ENCODE measurements at regions of chr5 and their contacts with region 1.

Region 1: DNA sequence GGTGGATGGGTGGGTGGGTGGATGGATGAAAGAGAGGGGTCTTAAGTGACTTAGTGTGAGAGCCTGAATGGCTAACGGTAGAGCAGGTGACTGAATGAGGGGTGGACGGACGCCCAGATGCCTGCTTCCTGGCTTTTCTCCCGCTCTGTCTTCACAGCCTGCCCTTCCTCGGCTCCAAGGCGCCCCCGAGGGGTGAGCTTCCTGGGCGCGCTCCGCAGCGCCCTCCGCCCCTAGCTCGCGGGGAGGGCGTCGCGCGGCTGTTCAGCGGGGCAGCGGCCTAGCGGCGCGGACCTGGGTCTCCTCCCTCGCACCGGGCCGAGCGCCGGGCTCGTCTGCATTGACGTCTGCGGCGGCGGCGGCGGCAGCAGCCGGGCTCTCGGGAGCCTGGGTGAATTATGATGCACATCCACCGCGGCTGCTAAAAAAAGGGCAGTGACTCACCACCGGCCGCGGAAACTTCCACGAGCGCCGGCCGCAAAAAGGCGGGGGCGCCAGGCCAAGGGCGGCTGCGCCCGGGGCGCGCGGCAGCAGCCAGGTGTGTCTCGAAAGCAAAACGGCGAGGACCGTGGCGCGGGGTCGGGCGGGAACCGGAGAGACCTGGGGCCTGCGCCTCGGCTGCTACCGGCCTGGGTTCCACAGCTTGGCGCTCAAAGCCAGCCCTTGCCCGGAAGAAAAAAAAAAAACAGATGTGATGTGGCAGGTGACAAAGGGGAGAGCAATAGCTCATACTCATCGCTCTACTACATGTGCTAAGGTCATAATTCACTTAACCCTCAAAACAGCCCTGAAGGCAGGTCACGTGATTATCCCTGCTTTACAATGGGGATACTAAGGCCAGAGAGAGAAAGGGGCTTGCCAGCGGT is 143.0 kb upstream of the ADRA1B start:
- DNase-seq: peak; percentile 92
- H3K4me3 Mint-ChIP-seq: peak overlapping the region; percentile 39
- H3K27ac Mint-ChIP-seq: peak overlapping the region; percentile 69
- H3K4me1 Mint-ChIP-seq: peaks cover 14% of the 10 kb centered on the region
- H3K27me3 Mint-ChIP-seq: peaks cover 45% of the 10 kb centered on the region

Region 2: DNA sequence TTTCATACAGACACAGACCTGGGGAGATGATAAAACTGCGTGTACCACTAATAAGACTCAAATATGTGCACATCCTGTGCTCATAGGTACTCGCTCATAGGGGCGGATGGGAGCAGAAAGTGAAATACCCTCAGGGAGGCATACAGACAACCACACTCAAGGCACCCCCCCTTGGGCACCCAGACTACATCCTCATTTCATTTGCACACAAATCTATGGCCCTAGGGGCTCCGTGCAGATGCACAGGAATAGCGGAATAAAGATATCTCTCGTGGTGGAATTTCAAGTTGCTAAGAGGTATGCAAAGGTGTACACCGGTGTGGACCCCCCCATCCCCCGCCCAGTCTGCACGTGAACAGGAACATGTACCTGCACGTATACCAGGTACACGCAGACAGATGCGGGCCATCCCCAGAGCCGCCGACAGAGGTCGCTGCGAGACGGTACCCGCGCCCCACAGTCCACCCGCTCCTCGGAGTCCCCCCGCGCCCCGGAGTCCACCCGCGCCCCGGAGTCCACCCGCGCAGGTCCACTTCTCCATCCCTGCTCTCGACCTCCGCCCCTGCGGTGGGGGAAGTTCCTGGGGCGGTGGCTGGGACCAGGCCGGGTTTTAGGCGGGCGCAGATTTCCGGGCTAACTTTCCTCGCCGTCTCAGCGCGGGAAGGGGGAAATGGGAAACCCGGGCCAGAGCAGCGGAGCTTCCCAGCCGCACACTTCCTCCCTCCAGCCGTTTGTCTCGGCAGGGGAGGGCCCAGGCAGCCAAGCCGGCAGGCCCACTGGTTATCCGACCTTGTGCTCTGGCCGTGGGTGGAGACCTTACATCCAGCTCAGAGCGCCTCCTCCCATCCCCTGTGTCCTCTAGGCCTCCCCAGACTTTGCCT is 442.0 kb before region 1 on chr5:
- CTCF ChIA-PET with region 1: no interaction called
- POLR2A ChIA-PET with region 1: no interaction called
- intact Hi-C with region 1: loop called (anchors 10 kb)
- DNase-seq: peak; percentile 84
- H3K4me3 Mint-ChIP-seq: peak overlapping the region; percentile 61
- H3K27ac Mint-ChIP-seq: no peak overlapping the region
- H3K4me1 Mint-ChIP-seq: peaks cover 16% of the 10 kb centered on the region
- H3K27me3 Mint-ChIP-seq: no peaks in the 10 kb centered on the region

Measured in activated CD4-positive, alpha-beta memory T cell treated with anti-CD3 and anti-CD28 coated beads for 36 hours (primary cell).